ENCODE measurements at regions of chr17 and their contacts with region 1.

Region 1: GRCh38 chr17:78258323-78259191 is 27.1 kb downstream of the TMEM235 start:
- DNase-seq: peak; percentile 57 to 82 (median 74)
- ATAC-seq: peak; percentile 65 to 79
- H3K4me3 Mint-ChIP-seq: peak overlapping the region; percentile 57 to 91 (median 82)
- H3K27ac Mint-ChIP-seq: peak overlapping the region; percentile 73 to 96 (median 92)
- H3K4me1 Mint-ChIP-seq: peaks cover 15 to 75% (median 66%) of the 10 kb centered on the region in 4 donors
- H3K27me3 Mint-ChIP-seq: no peaks in the 10 kb centered on the region

Region 2: DNA sequence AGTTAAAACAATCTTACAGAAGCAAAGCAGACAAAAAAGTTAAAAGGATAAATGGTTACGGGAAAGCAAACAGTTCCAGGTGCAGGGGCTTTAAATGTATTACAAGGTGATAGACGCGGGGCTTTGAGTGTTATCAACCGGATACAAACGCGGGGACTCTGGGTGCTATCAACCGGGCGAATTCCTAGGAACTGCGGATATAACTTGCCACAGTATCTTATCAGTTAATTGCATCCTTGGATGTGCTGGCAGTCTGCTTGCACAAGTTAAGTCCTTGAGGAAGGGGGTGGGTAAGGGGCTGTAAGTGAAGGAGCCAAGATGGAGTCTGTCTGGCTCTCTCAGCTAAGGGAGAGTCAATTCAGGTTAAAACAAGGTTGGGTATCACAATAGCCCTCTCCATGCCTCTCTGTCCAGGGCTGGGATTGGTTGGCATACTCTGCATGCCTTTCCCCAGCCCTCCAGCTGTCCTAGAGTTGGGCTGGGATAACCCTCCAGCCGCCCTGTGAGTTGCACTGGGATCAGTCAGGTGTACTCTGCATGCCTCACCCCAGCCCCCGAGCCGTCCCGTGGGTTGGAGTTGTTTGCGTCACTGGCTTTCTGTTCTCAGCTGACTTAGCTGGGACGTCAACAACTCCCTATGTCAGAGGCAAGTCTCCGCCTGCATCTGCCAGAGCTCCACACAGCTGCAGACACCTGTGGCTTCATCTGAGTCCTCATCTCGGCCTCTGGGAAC is 13.8 kb after region 1 on chr17:
- POLR2A ChIA-PET with region 1: interaction called, 16 read pairs
- DNase-seq: peak; percentile 43 to 85 (median 76)
- ATAC-seq: peak; percentile 93 to 94
- H3K4me3 Mint-ChIP-seq: peak overlapping the region; percentile 36 to 72 (median 54)
- H3K27ac Mint-ChIP-seq: peak overlapping the region; percentile 37 to 97 (median 90)
- H3K4me1 Mint-ChIP-seq: peaks cover 12 to 44% (median 37%) of the 10 kb centered on the region in 4 donors
- H3K27me3 Mint-ChIP-seq: peaks cover 0 to 2% (median 0%) of the 10 kb centered on the region in 5 donors